T-cell (primary cell): ENCODE measurements at regions of chr3 and their contacts with region 1.

Region 1: GRCh38 chr3:122523317-122523716 is 8.6 kb upstream of the KPNA1 start:
- DNase-seq: no peak
- ATAC-seq: no peak
- H3K4me3 ChIP-seq: no peak overlapping the region
- H3K4me3 Mint-ChIP-seq: no peak overlapping the region
- H3K27ac ChIP-seq: no peak overlapping the region
- H3K27ac Mint-ChIP-seq: no peak overlapping the region
- H3K4me1 ChIP-seq: no peaks in the 10 kb centered on the region
- H3K4me1 Mint-ChIP-seq: no peaks in the 10 kb centered on the region
- H3K27me3 ChIP-seq: no peaks in the 10 kb centered on the region
- H3K27me3 Mint-ChIP-seq: no peaks in the 10 kb centered on the region

Region 2: GRCh38 chr3:120713262-120713661 is 1810.1 kb before region 1 on chr3:
- CTCF ChIA-PET with region 1: no interaction called
- POLR2A ChIA-PET with region 1: no interaction called
- DNase-seq: no peak
- ATAC-seq: no peak
- H3K4me3 ChIP-seq: no peak overlapping the region
- H3K4me3 Mint-ChIP-seq: no peak overlapping the region
- H3K27ac ChIP-seq: no peak overlapping the region
- H3K27ac Mint-ChIP-seq: no peak overlapping the region
- H3K4me1 ChIP-seq: no peaks in the 10 kb centered on the region
- H3K4me1 Mint-ChIP-seq: peaks cover 22 to 24% (median 23%) of the 10 kb centered on the region in 3 donors
- H3K27me3 ChIP-seq: no peaks in the 10 kb centered on the region
- H3K27me3 Mint-ChIP-seq: no peaks in the 10 kb centered on the region

Region 3: DNA sequence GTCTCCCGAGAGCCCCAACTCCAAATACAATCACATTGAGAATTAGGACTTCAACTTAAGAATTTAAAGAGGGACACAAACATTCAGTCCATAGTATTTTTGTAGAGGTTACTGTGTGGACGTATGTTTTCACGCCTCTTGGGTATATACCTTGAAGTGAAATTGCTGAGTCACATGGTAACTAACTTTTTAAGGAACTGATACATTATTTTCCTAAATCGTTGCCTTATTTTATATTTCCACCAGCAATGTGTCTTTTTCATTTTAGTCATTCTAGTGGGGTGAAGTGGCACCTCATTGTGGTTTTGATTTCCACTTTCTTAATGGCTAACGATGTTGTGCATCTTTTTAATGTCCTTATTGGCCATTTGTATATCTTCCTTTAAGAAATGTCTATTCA is 66.0 kb after region 1 on chr3:
- CTCF ChIA-PET with region 1: no interaction called
- POLR2A ChIA-PET with region 1: interaction called in 1 of 2 experiments, 11 read pairs
- DNase-seq: no peak
- ATAC-seq: no peak
- H3K4me3 ChIP-seq: no peak overlapping the region
- H3K4me3 Mint-ChIP-seq: no peak overlapping the region
- H3K27ac ChIP-seq: no peak overlapping the region
- H3K27ac Mint-ChIP-seq: no peak overlapping the region
- H3K4me1 ChIP-seq: no peaks in the 10 kb centered on the region
- H3K4me1 Mint-ChIP-seq: peaks cover 22 to 42% (median 24%) of the 10 kb centered on the region in 3 donors
- H3K27me3 ChIP-seq: no peaks in the 10 kb centered on the region
- H3K27me3 Mint-ChIP-seq: no peaks in the 10 kb centered on the region

Region 4: GRCh38 chr3:122621112-122621511 is 97.8 kb after region 1 on chr3:
- CTCF ChIA-PET with region 1: no interaction called
- POLR2A ChIA-PET with region 1: no interaction called
- DNase-seq: no peak
- ATAC-seq: no peak
- H3K4me3 ChIP-seq: no peak overlapping the region
- H3K4me3 Mint-ChIP-seq: no peak overlapping the region
- H3K27ac ChIP-seq: no peak overlapping the region
- H3K27ac Mint-ChIP-seq: peak overlapping the region in 1 of 2 donors; percentile 8
- H3K4me1 ChIP-seq: no peaks in the 10 kb centered on the region
- H3K4me1 Mint-ChIP-seq: peaks cover 0 to 10% (median 0%) of the 10 kb centered on the region in 3 donors
- H3K27me3 ChIP-seq: no peaks in the 10 kb centered on the region
- H3K27me3 Mint-ChIP-seq: no peaks in the 10 kb centered on the region